HCT116 (cell line): ENCODE measurements at regions of chr15 and their contacts with region 1.

Region 1: GRCh38 chr15:44738340-44738984 is 2.1 kb downstream of the TRIM69 start:
- DNase-seq: peak; percentile 62
- ATAC-seq: peak; percentile 46
- H3K4me3 ChIP-seq: no peak overlapping the region
- H3K27ac ChIP-seq: no peak overlapping the region
- H3K4me1 ChIP-seq: no peaks in the 10 kb centered on the region
- H3K27me3 ChIP-seq: no peaks in the 10 kb centered on the region
- CTCF ChIP-seq: peak; percentile 58 to 92 (median 78)
- POLR2A ChIP-seq: no peak
- RAD21 ChIP-seq: peak; percentile 87

Region 2: GRCh38 chr15:44038755-44039191 is 699.7 kb before region 1 on chr15:
- CTCF ChIA-PET with region 1: no interaction called
- POLR2A ChIA-PET with region 1: no interaction called
- RAD21 ChIA-PET with region 1: no interaction called
- intact Hi-C with region 1: no loop called
- DNase-seq: no peak
- ATAC-seq: no peak
- H3K4me3 ChIP-seq: no peak overlapping the region
- H3K27ac ChIP-seq: no peak overlapping the region
- H3K4me1 ChIP-seq: peaks cover 5% of the 10 kb centered on the region in 2 experiments; a peak in 2 of 4 replicates
- H3K27me3 ChIP-seq: no peaks in the 10 kb centered on the region
- CTCF ChIP-seq: no peak
- POLR2A ChIP-seq: no peak
- RAD21 ChIP-seq: no peak

Region 3: GRCh38 chr15:44584162-44584749 is 154.2 kb before region 1 on chr15:
- CTCF ChIA-PET with region 1: interaction called, 36 read pairs
- POLR2A ChIA-PET with region 1: no interaction called
- RAD21 ChIA-PET with region 1: interaction called, 4 to 5 read pairs
- intact Hi-C with region 1: no loop called
- DNase-seq: peak; percentile 26
- ATAC-seq: peak; percentile 100
- H3K4me3 ChIP-seq: no peak overlapping the region
- H3K27ac ChIP-seq: no peak overlapping the region
- H3K4me1 ChIP-seq: no peaks in the 10 kb centered on the region
- H3K27me3 ChIP-seq: no peaks in the 10 kb centered on the region
- CTCF ChIP-seq: peak; percentile 47 to 84 (median 81); a peak in 5 of 6 replicates
- POLR2A ChIP-seq: no peak
- RAD21 ChIP-seq: peak; percentile 54

Region 4: DNA sequence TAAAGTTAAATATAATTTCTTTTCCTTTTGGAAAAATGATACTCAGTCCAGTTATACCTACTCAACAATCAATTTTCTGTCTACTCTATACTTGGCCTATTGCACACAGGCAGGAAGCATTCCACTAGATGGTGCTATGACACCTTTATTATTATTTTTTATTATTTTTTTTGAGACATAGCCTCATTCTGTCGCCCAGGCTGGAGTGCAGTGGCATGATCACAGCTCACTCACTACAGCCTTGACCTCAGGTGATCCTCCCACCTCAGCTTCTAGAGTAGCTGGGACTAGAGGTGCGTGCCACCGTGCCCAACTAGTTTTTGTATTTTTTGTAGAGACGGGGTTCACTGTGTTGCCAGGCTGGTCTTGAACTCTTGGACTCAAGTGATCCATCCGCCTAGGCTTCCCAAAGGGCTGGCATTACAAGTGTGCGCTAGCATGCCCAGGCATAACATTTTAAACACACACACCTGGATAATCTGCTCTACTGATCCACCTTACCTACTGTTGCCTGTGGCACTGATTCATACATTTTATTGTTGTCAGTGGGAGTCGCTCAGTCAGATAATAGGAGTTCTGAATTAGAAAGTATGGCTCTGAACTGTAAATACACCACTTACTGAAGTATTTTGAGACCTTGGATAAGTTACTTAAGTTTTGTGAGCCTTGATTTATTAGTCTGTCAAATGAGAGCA is 145.3 kb before region 1 on chr15:
- CTCF ChIA-PET with region 1: interaction called, 8 read pairs
- POLR2A ChIA-PET with region 1: no interaction called
- RAD21 ChIA-PET with region 1: interaction called, 3 to 4 read pairs
- intact Hi-C with region 1: loop called (anchors 1 kb)
- DNase-seq: peak; percentile 12
- ATAC-seq: peak; percentile 90
- H3K4me3 ChIP-seq: no peak overlapping the region
- H3K27ac ChIP-seq: no peak overlapping the region
- H3K4me1 ChIP-seq: no peaks in the 10 kb centered on the region
- H3K27me3 ChIP-seq: no peaks in the 10 kb centered on the region
- CTCF ChIP-seq: peak; percentile 55 to 64 (median 63); a peak in 5 of 6 replicates
- POLR2A ChIP-seq: no peak
- RAD21 ChIP-seq: peak; percentile 61

Region 5: DNA sequence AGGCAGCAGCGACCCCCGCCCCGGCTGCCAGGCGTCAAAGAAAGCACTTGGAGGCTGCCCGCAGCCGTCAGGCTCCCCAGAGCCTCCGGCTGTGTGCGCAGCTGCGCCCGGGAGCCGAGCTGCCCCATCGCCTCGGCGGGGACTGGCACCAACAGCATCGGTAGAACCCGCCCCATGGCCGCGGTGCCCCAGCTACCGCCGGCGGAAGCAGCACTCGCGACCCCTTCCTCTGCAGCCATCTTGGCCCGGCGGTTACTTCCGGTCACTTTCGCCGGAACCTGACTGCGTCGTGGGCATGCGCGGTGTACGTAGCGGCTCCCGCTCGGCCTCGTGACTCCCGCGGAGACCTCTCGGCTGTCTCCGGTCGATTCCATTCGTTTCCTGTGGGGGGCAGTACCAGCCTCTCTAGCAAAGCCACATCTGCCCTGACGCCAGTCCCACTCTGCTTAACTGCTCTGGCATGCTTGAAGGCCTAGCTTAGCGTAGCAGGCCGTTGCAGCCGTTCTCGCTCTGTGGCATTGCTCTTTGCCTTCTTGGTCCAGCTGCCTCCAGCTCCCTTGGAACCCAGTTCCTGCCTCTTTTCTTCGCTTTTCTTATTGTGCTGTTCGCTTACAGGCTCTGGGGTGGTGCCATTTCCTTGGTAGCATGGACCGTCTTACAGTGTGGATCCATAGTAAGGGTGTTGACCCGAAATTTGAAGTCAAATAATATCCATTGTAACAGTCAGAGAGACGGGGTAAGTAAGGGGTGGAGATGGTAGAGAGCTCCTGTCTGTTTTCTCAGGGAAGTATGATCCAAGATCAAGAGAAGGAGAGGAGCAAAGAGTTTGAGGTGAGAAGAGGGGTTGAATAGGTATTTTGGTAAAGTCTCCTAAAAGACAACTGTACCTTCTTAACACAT is 74.8 kb before region 1 on chr15 and contains the start of gene SPG11:
- CTCF ChIA-PET with region 1: interaction called, 39 read pairs
- POLR2A ChIA-PET with region 1: interaction called, 11 read pairs
- RAD21 ChIA-PET with region 1: interaction called, 4 to 16 read pairs
- intact Hi-C with region 1: loop called (anchors 1 kb)
- DNase-seq: peak; percentile 94
- ATAC-seq: peak; percentile 90
- H3K4me3 ChIP-seq: peak within 1 kb of the TSS; percentile 67 to 96
- H3K27ac ChIP-seq: peak within 1 kb of the TSS; percentile 87
- H3K4me1 ChIP-seq: peaks cover 5 to 13% of the 10 kb centered on the region in 2 experiments
- H3K27me3 ChIP-seq: no peaks in the 10 kb centered on the region
- CTCF ChIP-seq: peak; percentile 79 to 90 (median 81)
- POLR2A ChIP-seq: peak; percentile 83
- RAD21 ChIP-seq: peak; percentile 98
- total RNA-seq, gene SPG11: 34.8 TPM

Region 6: DNA sequence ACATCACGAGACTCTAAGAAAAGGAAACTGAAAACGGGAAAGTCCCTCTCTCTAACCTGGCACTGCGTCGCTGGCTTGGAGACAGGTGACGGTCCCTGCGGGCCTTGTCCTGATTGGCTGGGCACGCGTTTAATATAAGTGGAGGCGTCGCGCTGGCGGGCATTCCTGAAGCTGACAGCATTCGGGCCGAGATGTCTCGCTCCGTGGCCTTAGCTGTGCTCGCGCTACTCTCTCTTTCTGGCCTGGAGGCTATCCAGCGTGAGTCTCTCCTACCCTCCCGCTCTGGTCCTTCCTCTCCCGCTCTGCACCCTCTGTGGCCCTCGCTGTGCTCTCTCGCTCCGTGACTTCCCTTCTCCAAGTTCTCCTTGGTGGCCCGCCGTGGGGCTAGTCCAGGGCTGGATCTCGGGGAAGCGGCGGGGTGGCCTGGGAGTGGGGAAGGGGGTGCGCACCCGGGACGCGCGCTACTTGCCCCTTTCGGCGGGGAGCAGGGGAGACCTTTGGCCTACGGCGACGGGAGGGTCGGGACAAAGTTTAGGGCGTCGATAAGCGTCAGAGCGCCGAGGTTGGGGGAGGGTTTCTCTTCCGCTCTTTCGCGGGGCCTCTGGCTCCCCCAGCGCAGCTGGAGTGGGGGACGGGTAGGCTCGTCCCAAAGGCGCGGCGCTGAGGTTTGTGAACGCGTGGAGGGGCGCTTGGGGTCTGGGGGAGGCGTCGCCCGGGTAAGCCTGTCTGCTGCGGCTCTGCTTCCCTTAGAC is 26.9 kb before region 1 on chr15 and contains the start of gene B2M:
- CTCF ChIA-PET with region 1: interaction called, 16 read pairs
- POLR2A ChIA-PET with region 1: interaction called, 7 read pairs
- RAD21 ChIA-PET with region 1: interaction called, 4 to 6 read pairs
- intact Hi-C with region 1: no loop called
- DNase-seq: peak; percentile 90
- ATAC-seq: peak; percentile 91
- H3K4me3 ChIP-seq: peak within 1 kb of the TSS; percentile 84 to 93
- H3K27ac ChIP-seq: peak within 1 kb of the TSS; percentile 69
- H3K4me1 ChIP-seq: peaks cover 11 to 28% of the 10 kb centered on the region in 2 experiments; a peak in 3 of 4 replicates
- H3K27me3 ChIP-seq: no peaks in the 10 kb centered on the region
- CTCF ChIP-seq: no peak
- POLR2A ChIP-seq: peak; percentile 98
- RAD21 ChIP-seq: no peak
- total RNA-seq, gene B2M: 388 TPM

Region 7: DNA sequence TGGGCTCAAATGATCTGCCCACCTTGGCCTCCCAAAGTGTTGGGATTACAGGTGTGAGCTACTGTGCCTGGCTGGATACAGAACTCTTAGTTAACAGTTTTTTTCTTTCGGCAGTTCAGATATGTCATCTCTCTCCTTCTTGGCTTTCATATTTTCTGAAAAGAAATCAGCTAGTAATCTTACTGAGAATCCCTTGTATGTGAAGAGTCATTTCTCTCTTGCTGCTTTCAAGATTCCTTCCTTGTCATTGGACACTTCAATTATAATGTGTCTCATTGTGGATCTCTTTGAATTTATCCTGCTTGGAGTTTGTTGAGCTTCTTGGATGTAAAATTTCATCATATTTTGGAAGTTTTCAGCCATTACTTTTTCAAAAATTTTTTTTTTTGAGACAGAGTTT is 14.9 kb after region 1 on chr15:
- CTCF ChIA-PET with region 1: interaction called, 10 read pairs
- POLR2A ChIA-PET with region 1: no interaction called
- RAD21 ChIA-PET with region 1: no interaction called
- intact Hi-C with region 1: no loop called
- DNase-seq: no peak
- ATAC-seq: no peak
- H3K4me3 ChIP-seq: no peak overlapping the region
- H3K27ac ChIP-seq: no peak overlapping the region
- H3K4me1 ChIP-seq: no peaks in the 10 kb centered on the region
- H3K27me3 ChIP-seq: 0 out of 2 replicates have a peak, but pooled peaks cover 5% of the 10 kb centered on the region
- CTCF ChIP-seq: no peak
- POLR2A ChIP-seq: no peak
- RAD21 ChIP-seq: no peak